GM12878 (cell line): ENCODE measurements at regions of chr16 and their contacts with region 1.

Region 1: GRCh38 chr16:66270333-66270927 is 96.1 kb upstream of the CDH5 start:
- DNase-seq: no peak
- ATAC-seq: peak; percentile 80
- H3K4me3 ChIP-seq: no peak overlapping the region
- H3K27ac ChIP-seq: no peak overlapping the region
- H3K4me1 ChIP-seq: no peaks in the 10 kb centered on the region
- H3K27me3 ChIP-seq: peaks cover 0 to 2% of the 10 kb centered on the region in 2 experiments; a peak in 3 of 4 replicates
- CTCF ChIP-seq: peak; percentile 68 to 76 (median 71)
- EP300 ChIP-seq: no peak
- POLR2A ChIP-seq: no peak
- RAD21 ChIP-seq: peak; percentile 51

Region 2: GRCh38 chr16:65704866-65705265 is 565.6 kb before region 1 on chr16:
- CTCF ChIA-PET with region 1: no interaction called
- POLR2A ChIA-PET with region 1: no interaction called
- RAD21 ChIA-PET with region 1: no interaction called
- SMC1A ChIA-PET with region 1: no interaction called
- in situ Hi-C with region 1: no loop called
- intact Hi-C with region 1: loop called (anchors 2 kb)
- DNase-seq: no peak
- ATAC-seq: no peak
- H3K4me3 ChIP-seq: no peak overlapping the region
- H3K27ac ChIP-seq: no peak overlapping the region
- H3K4me1 ChIP-seq: no peaks in the 10 kb centered on the region
- H3K27me3 ChIP-seq: no peaks in the 10 kb centered on the region
- CTCF ChIP-seq: peak in 1 of 3 experiments; percentile 2; a peak in 1 of 6 replicates
- EP300 ChIP-seq: no peak
- POLR2A ChIP-seq: no peak
- RAD21 ChIP-seq: peak; percentile 26; the same call in 1 of the 2 replicates

Region 3: DNA sequence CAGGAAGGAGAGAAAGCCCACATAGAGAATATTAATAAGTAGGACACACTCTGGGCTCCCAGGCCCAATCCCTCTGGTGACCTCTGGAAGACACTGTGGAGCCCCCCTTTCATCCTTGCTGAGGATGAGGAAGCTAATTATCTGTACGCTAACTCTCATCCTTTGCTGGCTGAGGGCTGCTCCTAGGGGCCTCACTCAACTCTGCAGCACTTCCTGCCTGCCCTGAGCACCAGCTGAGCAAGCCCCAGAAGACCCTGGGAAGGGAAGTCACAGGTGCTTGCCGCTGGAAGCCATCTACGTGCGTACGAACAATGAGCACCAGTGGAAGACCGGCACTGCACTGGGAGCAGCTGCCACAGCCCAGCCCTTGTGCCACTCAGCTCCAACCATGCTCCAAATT is 49.7 kb before region 1 on chr16:
- CTCF ChIA-PET with region 1: no interaction called
- POLR2A ChIA-PET with region 1: no interaction called
- RAD21 ChIA-PET with region 1: no interaction called
- SMC1A ChIA-PET with region 1: no interaction called
- in situ Hi-C with region 1: no loop called
- intact Hi-C with region 1: loop called (anchors 2 kb)
- DNase-seq: no peak
- ATAC-seq: no peak
- H3K4me3 ChIP-seq: no peak overlapping the region
- H3K27ac ChIP-seq: no peak overlapping the region
- H3K4me1 ChIP-seq: no peaks in the 10 kb centered on the region
- H3K27me3 ChIP-seq: no peaks in the 10 kb centered on the region; a peak in 1 of 4 replicates
- CTCF ChIP-seq: no peak
- EP300 ChIP-seq: no peak
- POLR2A ChIP-seq: no peak
- RAD21 ChIP-seq: no peak